ENCODE measurements at regions of chr2 and their contacts with region 1.

Region 1: DNA sequence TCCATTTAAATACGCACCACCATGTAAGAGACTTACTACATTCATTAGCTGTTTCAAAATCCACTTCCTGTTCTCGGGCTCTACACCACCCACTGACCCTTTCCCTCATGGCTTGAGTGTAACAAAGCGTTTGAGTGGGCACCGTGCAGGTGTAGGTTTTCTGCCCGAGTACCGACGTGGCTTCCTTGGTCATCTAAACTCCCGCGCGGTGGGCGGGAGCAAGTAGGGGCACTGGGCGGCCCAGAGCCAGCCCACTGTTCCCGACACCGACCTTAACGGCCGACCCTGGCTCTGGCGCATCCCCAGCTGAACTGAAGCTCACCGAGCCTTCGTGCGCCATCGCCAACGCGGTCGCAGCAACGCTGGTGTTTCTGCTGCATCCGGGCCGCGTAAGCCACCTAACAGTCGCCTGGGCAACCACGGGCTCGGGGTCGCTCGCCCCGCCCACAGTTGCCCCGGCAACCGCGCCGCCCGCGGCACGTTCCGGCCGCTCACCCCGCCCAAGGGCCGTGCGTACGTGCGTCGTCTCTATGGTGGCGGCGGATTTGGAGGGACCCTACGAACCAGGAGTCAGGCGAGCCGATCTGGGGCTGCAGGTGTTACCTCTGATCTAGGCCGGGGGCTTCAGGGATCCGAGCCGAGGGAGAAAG is at the starts of genes C2orf81 and WDR54:
- DNase-seq: peak; percentile 97
- H3K4me3 ChIP-seq: peak within 1 kb of the TSS; percentile 82
- H3K27ac ChIP-seq: peak within 1 kb of the TSS; percentile 88
- H3K4me1 ChIP-seq: peaks cover 33% of the 10 kb centered on the region
- CTCF ChIP-seq: no peak
- total RNA-seq, gene C2orf81: 3.2 and 5.5 TPM in 2 replicates
- total RNA-seq, gene WDR54: 55.5 and 64.7 TPM in 2 replicates

Region 2: GRCh38 chr2:73293534-73294171 is 1127.7 kb before region 1 on chr2 and contains the start of gene EGR4:
- CTCF ChIA-PET with region 1: no interaction called
- POLR2A ChIA-PET with region 1: no interaction called
- intact Hi-C with region 1: no loop called
- DNase-seq: peak; percentile 33
- H3K4me3 ChIP-seq: peak within 1 kb of the TSS; percentile 56
- H3K27ac ChIP-seq: no peak within 1 kb of the TSS
- H3K4me1 ChIP-seq: no peaks in the 10 kb centered on the region
- CTCF ChIP-seq: no peak
- total RNA-seq, gene EGR4: not detected in 2 replicates

Region 3: GRCh38 chr2:74085976-74086375 is 335.4 kb before region 1 on chr2:
- CTCF ChIA-PET with region 1: no interaction called
- POLR2A ChIA-PET with region 1: no interaction called
- intact Hi-C with region 1: no loop called
- DNase-seq: no peak
- H3K4me3 ChIP-seq: no peak overlapping the region
- H3K27ac ChIP-seq: no peak overlapping the region
- H3K4me1 ChIP-seq: no peaks in the 10 kb centered on the region
- CTCF ChIP-seq: no peak

Region 4: DNA sequence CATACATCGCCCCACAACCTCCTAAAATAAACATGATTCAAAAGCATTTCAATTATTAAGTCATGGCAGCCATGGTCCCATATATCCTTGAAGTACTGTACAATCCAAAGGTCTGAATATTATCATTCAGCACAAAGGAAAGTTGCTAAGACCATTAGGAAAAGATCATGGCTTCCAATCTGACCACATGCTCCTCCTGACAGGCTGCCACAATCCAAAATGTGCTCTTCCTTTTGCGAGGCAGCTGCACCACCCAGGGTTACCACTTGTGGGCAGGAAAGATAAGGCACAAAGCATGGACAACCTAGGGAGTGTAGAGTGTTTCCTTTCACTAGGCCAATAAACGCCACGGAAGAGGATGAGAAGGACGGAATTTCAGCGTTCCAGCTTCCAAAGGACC is 279.0 kb before region 1 on chr2:
- CTCF ChIA-PET with region 1: interaction called, 12 read pairs
- POLR2A ChIA-PET with region 1: no interaction called
- intact Hi-C with region 1: no loop called
- DNase-seq: peak; percentile 41
- H3K4me3 ChIP-seq: no peak overlapping the region
- H3K27ac ChIP-seq: no peak overlapping the region
- H3K4me1 ChIP-seq: peaks cover 9% of the 10 kb centered on the region
- CTCF ChIP-seq: peak; percentile 70

Region 5: DNA sequence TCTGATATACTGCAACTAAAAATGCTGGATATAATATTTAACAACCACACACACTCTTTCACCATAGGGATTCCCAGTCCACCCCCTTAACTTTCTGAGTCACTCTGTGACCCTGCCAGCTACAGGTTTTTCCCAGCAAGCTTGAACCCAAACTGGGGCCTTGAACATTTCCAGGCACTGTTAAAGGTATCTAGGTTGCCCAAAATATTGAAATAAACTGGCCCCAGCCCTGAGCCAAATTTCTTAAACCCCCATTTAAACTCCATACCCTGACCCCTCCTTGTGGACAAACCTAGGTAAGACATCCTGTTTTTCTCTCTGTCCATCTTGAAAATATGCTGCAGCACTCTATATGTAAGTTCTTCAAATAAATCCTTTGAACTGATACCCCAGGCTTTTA is 21.6 kb before region 1 on chr2:
- CTCF ChIA-PET with region 1: no interaction called
- POLR2A ChIA-PET with region 1: interaction called, 11 read pairs
- intact Hi-C with region 1: no loop called
- DNase-seq: peak; percentile 62
- H3K4me3 ChIP-seq: no peak overlapping the region
- H3K27ac ChIP-seq: no peak overlapping the region
- H3K4me1 ChIP-seq: peaks cover 4% of the 10 kb centered on the region
- CTCF ChIP-seq: peak; percentile 85

Region 6: DNA sequence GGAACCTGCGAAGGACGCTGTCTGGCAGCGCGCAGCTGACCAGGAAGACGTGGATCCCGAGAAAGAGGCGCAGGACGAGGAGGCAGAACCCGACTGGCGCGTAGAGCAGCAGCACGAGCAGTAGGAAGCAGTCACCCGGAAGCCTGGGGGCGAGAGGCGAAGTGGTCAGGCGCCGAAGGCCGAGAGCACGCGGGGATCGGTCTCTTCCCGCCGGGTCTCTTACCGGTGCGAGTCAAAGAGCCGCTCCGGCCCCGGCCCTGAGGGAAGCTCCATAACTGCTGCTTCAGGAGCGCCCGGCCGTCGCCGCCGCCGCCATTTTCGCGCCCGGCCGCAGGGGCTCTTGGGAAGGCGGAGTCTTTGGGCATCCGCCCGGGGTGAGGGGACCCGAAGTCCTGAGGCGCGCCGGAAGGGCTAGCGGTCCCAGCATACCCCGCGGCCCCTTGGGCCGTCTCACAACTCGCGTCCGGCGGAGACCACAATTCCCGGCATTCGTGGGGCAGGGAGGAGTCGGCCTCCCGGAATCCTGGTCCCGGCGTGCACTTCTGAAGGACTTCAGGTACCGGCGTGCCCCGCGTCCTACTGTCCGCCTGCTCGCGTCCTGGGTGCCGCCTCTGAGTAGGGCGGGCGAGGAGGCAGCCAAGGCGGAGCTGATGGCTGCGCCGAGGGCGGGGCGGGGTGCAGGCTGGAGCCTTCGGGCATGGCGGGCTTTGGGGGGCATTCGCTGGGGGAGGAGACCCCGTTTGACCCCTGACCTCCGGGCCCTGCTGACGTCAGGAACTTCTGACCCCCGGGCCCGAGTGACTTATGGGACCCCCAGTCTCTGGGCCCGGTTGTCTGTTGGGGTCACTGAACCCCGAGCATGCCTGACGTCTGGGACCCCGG is 108.3 kb after region 1 on chr2 and contains the starts of genes AUP1 and HTRA2:
- CTCF ChIA-PET with region 1: no interaction called
- POLR2A ChIA-PET with region 1: no interaction called
- intact Hi-C with region 1: loop called (anchors 1 kb)
- DNase-seq: peak; percentile 99
- H3K4me3 ChIP-seq: peak within 1 kb of the TSS; percentile 98
- H3K27ac ChIP-seq: peak within 1 kb of the TSS; percentile 67
- H3K4me1 ChIP-seq: peaks cover 33% of the 10 kb centered on the region
- CTCF ChIP-seq: no peak
- total RNA-seq, gene AUP1: 163 and 188 TPM in 2 replicates
- total RNA-seq, gene HTRA2: 54.8 and 60.4 TPM in 2 replicates

Measured in OCI-LY7 (cell line).